Tibial artery (tissue), 4 donors: ENCODE measurements at regions of chr11 and their contacts with region 1.

Region 1: DNA sequence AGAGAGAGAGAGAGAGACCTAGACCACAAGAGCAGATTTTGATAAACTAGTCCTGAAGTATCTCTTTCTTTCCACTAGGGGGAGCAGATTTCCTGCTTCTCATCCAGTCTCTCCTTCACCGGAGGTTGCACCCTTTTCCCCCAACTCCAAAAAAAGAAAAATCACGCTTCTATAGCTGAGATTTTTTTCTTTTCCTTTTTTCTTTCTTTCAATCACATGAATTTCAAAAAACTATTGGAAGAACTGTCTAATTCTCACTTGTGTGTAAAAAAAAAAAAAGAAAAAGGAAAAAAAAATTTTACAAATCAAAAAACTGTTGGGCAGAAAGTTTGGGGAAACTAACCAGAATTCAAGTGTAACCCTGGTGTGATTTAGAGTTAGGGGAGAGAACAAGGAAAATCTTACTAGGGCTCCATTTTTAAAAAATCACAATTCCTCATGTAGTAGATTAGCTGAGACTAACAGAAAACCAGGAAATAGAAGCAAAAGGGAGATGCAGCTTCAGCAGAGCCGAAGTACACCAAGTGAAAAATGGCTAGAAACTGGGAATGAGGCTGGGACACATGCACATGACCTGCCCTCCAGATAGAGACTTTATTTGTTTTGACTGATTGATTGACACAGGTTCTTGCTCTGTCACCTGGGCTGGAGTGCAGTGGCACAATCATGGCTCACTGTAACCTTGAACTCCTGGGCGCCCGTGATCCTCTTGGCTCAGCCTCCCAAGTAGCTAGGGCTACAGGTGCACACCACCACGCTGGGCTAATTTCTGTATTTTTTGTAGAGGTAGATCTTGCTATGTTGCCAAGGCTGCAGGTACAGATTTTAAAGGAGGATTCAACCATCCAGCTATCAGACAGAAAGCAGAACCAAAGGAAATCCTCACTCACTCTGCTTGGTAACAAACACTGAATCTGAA is 27.1 kb downstream of the SDHD start:
- DNase-seq: no peak
- H3K4me3 ChIP-seq: no peak overlapping the region
- H3K27ac ChIP-seq: no peak overlapping the region
- H3K4me1 ChIP-seq: no peaks in the 10 kb centered on the region
- H3K27me3 ChIP-seq: no peaks in the 10 kb centered on the region
- CTCF ChIP-seq: peak; percentile 59 to 67

Region 2: DNA sequence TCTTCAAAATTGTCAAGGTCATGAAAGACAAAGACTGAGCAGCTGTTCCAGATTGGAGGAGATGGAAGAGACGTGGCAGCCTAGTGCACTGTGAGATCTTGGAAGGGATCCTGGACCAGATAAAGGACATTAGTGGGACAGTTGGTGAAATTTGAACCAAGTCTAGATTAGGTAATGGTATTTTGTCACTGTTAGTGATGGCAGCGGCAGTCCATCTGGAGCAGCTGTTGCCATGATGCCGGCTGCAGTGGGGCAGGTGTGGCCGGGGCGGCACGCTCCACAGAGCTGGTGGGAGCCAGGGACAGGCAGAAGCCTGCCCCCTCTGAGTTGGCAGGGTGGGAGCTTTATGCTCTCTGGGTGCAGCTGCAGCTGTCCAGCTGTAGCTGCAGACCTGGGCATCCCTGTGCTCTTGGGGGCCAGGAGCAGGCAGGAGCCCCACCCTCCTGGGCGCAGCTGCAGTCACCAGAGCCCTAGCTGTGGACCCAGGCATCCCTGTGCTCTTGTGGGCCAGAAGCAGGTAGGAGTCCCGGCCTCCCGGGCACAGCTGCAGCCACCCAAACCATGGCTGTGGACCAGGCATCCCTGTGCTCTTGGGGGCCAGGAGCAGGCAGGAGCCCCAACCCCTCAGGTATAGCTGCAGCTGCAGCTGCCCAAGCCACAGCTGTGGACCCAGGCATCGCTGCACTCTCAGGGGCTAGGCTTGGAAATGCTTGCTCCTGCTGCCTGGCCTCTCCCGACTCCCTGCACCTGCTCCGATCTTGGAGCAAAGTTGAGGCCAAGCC is 155.9 kb before region 1 on chr11:
- intact Hi-C with region 1: no loop called
- DNase-seq: no peak
- H3K4me3 ChIP-seq: no peak overlapping the region
- H3K27ac ChIP-seq: no peak overlapping the region
- H3K4me1 ChIP-seq: no peaks in the 10 kb centered on the region
- H3K27me3 ChIP-seq: no peaks in the 10 kb centered on the region
- CTCF ChIP-seq: no peak

Region 3: GRCh38 chr11:112174789-112175598 is 61.2 kb after region 1 on chr11 and contains the start of gene BCO2:
- intact Hi-C with region 1: loop called (anchors 10 kb)
- DNase-seq: peak; percentile 85 to 87
- H3K4me3 ChIP-seq: peak within 1 kb of the TSS; percentile 10 to 37
- H3K27ac ChIP-seq: peak within 1 kb of the TSS; percentile 19 to 24
- H3K4me1 ChIP-seq: peaks cover 0 to 24% (median 5%) of the 10 kb centered on the region in 4 donors
- H3K27me3 ChIP-seq: no peaks in the 10 kb centered on the region
- CTCF ChIP-seq: peak; percentile 62 to 63

Region 4: GRCh38 chr11:112185883-112186282 is 72.1 kb after region 1 on chr11:
- intact Hi-C with region 1: no loop called
- DNase-seq: no peak
- H3K4me3 ChIP-seq: no peak overlapping the region
- H3K27ac ChIP-seq: no peak overlapping the region
- H3K4me1 ChIP-seq: no peaks in the 10 kb centered on the region
- H3K27me3 ChIP-seq: no peaks in the 10 kb centered on the region
- CTCF ChIP-seq: no peak